ENCODE measurements at regions of chr5 and their contacts with region 1.

Region 1: GRCh38 chr5:14035859-14036440 is 91.5 kb upstream of the DNAH5 start:
- DNase-seq: peak in 1 of 2 donors; percentile 76
- H3K4me3 ChIP-seq: peak overlapping the region in 1 of 2 donors; percentile 46
- H3K27ac ChIP-seq: peak overlapping the region; percentile 11 to 76
- H3K4me1 ChIP-seq: peaks cover 5 to 19% of the 10 kb centered on the region in 2 donors
- H3K27me3 ChIP-seq: no peaks in the 10 kb centered on the region
- CTCF ChIP-seq: no peak

Region 2: GRCh38 chr5:14011089-14012004 is 24.6 kb before region 1 on chr5:
- intact Hi-C with region 1: loop called (anchors 1 kb)
- DNase-seq: peak; percentile 43 to 90
- H3K4me3 ChIP-seq: peak overlapping the region; percentile 51 to 65
- H3K27ac ChIP-seq: peak overlapping the region; percentile 9 to 13
- H3K4me1 ChIP-seq: peaks cover 4 to 5% of the 10 kb centered on the region in 2 donors
- H3K27me3 ChIP-seq: no peaks in the 10 kb centered on the region
- CTCF ChIP-seq: no peak